Activated T-helper 2 cell treated with anti-CD3 and anti-CD28 coated beads, Interferon-gamma antibody, Interleukin-2, Interleukin-4, amounts not matched to agents 10 μg/mL and 5 μg/mL and 100 μg/mL, durations not matched to agents 14 hours and 24 hours and 36 hours (primary cell): ENCODE measurements at regions of chr3 and their contacts with region 1.

Region 1: GRCh38 chr3:177810162-177810623 is 612.9 kb upstream of the TBL1XR1 start:
- DNase-seq: no peak
- H3K4me3 Mint-ChIP-seq: no peak overlapping the region
- H3K27ac Mint-ChIP-seq: no peak overlapping the region
- H3K4me1 Mint-ChIP-seq: peaks cover 17% of the 10 kb centered on the region
- H3K27me3 Mint-ChIP-seq: no peaks in the 10 kb centered on the region

Region 2: DNA sequence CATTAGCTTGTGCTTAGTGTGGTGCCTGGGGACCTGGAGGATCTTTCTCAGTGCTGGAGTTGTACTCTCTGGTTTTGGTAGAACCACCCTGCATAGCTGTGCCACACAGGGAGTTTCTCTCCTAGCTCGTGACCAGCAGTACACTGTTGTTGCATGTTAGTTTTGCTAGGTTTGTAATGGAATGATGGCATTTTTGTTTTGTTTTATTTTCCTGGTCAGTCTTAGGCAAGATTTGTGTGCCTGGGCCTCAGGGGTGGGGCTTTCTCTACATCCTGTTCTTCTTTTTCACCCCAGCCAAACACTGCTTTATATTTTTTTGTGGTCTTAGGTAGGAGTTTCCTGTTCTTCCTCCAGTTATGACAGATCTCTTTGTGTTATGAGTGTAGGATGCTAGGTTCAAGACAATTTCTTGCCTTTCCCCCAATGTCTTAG is 191.5 kb after region 1 on chr3:
- intact Hi-C with region 1: loop called (anchors 5 kb)
- DNase-seq: peak; percentile 21
- H3K4me3 Mint-ChIP-seq: no peak overlapping the region
- H3K27ac Mint-ChIP-seq: peak overlapping the region; percentile 78
- H3K4me1 Mint-ChIP-seq: peaks cover 38% of the 10 kb centered on the region
- H3K27me3 Mint-ChIP-seq: no peaks in the 10 kb centered on the region